ENCODE measurements at regions of chr9 and their contacts with region 1.

Region 1: DNA sequence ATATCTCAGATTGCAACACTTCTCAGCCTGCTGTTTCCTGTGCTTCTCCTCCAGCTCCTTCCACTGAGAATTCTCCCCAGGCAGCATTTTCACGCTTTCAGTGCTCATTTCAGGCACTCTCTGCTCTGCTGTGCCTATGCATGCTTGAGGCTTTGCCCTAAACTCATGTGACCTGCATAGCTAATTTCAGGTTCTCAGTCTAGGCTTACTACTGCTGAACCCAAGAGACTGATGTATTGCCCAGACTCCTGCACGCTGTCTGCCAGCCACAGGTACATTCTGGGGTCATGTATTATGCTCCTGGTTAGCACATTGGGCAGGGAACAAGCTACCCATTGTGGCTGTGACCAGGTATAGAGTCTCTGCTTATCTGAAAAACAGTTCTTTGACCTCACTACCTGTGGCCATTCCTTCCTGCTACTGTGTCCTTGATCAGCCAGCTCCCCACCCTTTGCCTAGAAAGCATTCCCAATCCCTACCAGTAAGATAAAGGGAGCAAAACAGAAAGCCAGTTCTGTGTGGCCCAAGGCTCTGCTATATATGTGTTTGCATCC is 34.7 kb downstream of the PIP5K1B start:
- DNase-seq: no peak
- H3K4me3 ChIP-seq: no peak overlapping the region
- CTCF ChIP-seq: no peak
- POLR2A ChIP-seq: no peak

Region 2: GRCh38 chr9:68683433-68683832 is 56.3 kb before region 1 on chr9:
- intact Hi-C with region 1: loop called (anchors 2 kb)
- DNase-seq: no peak
- H3K4me3 ChIP-seq: no peak overlapping the region
- CTCF ChIP-seq: no peak
- POLR2A ChIP-seq: no peak